ENCODE measurements at regions of chr10 and their contacts with region 1.

Region 1: DNA sequence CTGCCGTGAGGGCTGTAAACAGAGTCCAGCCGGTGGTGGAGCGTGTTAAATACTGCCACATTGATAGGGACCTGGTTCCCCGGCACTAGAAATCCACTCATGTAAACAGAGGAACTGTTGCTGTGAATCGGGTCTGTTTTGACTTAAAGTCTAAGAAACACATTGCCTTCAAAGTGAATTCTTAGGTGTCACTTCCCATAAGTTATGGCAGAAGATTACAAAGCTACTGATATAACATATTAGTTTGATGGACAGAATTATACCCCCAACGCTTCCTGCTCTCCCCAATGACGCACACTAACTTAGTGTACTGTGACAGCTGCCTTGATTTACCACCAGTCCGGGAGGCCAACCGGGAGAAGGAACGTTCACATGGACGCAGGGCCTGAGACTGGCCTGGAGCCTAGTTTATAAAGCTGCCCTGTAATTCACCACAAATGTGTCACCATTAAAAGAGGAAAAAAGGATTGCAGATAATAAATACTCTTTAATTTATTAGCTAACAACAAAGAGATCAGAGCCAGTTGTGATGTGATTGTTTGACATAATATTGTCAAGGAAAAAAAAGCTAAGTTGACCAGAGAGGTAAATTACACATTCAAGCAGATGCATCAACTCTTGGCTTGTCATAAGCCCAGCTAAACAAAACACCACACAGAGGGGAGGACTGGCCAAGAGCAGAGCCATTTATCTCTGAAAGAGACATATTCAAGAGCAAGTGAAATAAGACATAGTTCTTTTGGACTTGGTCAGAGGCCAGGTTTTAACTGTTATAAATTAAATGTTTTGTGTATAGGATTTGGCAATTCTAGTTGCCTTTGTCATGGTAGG is 820.6 kb downstream of the LRMDA start:
- DNase-seq: peak; percentile 38
- H3K4me3 ChIP-seq: no peak overlapping the region
- H3K27ac ChIP-seq: peak overlapping the region in 1 of 2 donors; percentile 33
- H3K4me1 ChIP-seq: no peaks in the 10 kb centered on the region
- H3K27me3 ChIP-seq: no peaks in the 10 kb centered on the region
- CTCF ChIP-seq: no peak
- POLR2A ChIP-seq: no peak

Region 2: DNA sequence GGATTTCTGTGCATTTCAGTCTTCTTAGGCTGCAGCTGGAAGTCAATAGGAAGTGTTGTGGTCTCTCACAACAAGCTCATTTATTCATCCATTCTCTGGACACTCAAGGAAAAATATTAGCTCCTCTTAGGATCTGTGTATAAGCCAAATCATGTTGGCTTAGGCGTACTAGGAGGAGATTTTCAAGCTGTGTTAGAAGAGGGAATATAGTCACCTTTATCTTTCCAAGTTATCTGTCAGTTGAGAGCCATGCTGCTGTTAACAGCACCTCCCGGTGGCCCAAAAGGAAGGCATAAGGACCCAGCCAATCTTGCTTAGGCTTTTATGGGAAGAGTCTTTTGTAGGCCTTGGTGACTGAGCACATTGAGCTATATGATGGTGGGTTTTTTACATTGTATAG is 600.6 kb before region 1 on chr10:
- intact Hi-C with region 1: loop called (anchors 5 kb)
- DNase-seq: no peak
- H3K4me3 ChIP-seq: no peak overlapping the region
- H3K27ac ChIP-seq: no peak overlapping the region
- H3K4me1 ChIP-seq: no peaks in the 10 kb centered on the region
- H3K27me3 ChIP-seq: no peaks in the 10 kb centered on the region
- CTCF ChIP-seq: peak in 2 of 4 experiments; percentile 6 to 16
- POLR2A ChIP-seq: no peak

Region 3: GRCh38 chr10:75972491-75973276 is 279.4 kb before region 1 on chr10:
- intact Hi-C with region 1: loop called (anchors 10 kb)
- DNase-seq: no peak
- H3K4me3 ChIP-seq: no peak overlapping the region
- H3K27ac ChIP-seq: no peak overlapping the region
- H3K4me1 ChIP-seq: no peaks in the 10 kb centered on the region
- H3K27me3 ChIP-seq: no peaks in the 10 kb centered on the region
- CTCF ChIP-seq: no peak
- POLR2A ChIP-seq: no peak

Region 4: DNA sequence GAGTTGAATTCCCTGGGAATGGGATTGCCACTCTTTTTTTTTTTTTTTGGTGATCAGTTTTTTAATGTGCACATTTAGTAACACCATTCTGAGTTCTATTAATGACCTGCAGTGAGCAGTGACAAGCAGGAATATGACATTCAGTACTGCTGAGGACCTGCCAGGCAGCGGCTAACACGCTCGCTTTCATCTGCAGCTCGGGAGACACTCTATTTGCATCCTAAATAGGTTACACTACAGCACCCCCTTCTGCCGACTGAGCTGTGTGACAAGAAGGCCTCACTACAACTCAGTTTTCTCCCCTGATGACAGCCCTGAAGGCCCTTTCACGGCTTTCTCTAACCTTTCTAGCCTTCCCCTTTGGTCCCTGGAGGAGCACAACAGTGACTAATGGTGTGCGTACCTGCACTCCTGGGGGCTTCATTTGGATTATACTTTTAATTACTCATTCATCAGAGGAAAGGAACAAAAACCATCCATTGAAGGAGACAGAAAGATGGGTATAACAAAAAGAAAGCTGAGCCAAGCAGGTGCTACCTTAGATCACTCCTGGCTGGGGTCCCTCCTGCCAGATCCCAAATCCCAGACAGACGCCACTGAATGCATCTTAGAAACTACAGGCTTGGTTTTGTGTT is 51.7 kb after region 1 on chr10:
- intact Hi-C with region 1: loop called (anchors 5 kb)
- DNase-seq: peak; percentile 83
- H3K4me3 ChIP-seq: no peak overlapping the region
- H3K27ac ChIP-seq: peak overlapping the region in 1 of 2 donors; percentile 16
- H3K4me1 ChIP-seq: no peaks in the 10 kb centered on the region
- H3K27me3 ChIP-seq: no peaks in the 10 kb centered on the region
- CTCF ChIP-seq: peak in 3 of 4 experiments; percentile 39 to 73 (median 69)
- POLR2A ChIP-seq: no peak

Region 5: DNA sequence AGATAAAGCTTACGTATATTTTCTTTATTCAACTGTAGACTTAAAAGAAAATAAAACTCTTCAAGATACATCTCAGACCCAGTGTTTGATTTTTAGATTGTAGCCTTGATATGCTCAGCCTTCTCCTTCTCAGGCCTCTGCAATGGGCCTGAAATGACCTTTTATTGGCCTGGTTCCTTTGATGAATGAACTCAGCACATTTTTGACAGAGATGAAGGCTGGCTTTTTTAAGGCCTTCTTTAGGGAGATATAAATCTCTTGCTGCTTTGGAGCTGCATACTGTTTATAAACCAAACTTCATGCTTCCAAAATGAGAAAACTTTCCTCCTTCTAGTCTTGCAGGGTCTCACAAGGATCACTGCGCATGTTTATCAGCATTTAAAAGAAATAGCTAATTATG is 229.1 kb after region 1 on chr10:
- intact Hi-C with region 1: no loop called
- DNase-seq: no peak
- H3K4me3 ChIP-seq: no peak overlapping the region
- H3K27ac ChIP-seq: no peak overlapping the region
- H3K4me1 ChIP-seq: no peaks in the 10 kb centered on the region
- H3K27me3 ChIP-seq: no peaks in the 10 kb centered on the region
- CTCF ChIP-seq: no peak
- POLR2A ChIP-seq: no peak

Region 6: DNA sequence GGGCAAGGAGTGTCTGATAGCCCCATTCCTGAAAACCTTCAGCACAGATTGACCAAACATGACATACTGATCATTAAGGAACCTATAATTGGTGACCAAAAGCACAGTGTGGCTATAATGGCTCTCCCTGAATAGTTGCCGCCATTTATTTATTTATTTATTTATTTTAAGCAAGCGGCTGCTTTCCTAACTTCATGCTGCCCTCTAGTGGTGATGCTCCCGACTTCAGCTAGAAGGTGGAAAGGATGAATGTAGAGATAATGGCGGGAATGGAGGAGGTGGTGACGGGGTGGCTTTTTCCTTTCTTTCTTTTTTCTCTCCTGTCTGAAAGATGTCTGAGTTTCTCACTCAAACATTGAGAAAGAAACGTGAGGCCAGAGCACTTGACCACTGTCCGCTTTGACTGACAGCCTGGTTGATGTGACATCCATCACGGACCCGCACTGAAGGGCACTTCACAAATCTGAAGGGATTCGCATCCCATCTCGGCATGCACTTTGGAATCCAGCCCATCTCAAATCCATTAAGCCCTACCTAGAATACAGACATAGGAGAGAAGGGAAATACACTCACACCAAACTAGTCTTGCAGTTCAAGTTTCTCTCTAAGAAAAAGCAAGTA is 295.4 kb after region 1 on chr10:
- intact Hi-C with region 1: loop called (anchors 5 kb)
- DNase-seq: peak; percentile 82
- H3K4me3 ChIP-seq: no peak overlapping the region
- H3K27ac ChIP-seq: no peak overlapping the region
- H3K4me1 ChIP-seq: no peaks in the 10 kb centered on the region
- H3K27me3 ChIP-seq: no peaks in the 10 kb centered on the region
- CTCF ChIP-seq: peak; percentile 74 to 86 (median 82)
- POLR2A ChIP-seq: no peak